SK-N-SH (cell line): ENCODE measurements at regions of chr20 and their contacts with region 1.

Region 1: DNA sequence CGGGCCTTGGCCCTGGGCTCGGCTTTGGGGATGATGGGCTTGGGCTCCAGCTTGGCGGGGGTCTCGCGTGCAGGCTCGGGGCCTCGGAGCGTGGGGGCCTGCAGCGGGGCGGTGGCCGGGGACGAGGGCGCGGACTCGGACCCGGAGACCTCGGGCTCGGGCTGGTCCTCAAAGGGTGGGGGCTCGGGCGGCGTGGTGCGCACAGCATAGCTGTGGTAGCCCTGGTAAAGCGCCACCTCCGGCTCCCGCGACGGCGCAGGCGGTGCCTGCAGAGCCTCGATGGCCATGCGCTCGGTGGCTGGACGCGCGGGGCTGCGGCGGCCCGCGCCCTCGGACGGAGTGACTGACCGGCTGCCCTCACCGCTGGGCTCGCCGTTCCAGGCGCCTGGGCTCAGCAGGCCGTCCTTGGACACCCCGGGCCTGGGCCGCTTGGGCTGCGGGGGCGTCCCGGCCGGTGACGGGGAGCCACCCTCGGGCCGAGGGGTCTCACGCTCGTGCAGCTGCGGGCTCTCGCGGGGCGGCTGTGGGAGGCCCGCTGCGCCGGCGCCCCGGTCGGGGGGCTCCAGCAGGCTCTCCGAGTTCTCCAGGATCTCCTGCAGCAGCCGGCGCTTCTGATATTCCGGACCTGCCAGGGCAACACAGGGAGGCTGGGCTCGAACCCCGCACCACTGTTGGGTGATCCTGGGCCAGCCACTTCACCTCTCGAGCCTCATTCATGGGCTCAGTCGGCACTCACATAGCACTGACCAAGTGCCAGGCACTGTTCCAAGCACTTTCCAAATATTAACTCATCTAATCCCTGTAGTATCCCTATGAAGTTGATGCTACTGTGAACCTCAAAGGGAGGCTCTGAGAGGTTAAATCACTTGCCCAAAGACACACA is 71.0 kb downstream of the JPH2 start:
- DNase-seq: peak; percentile 52
- H3K4me3 ChIP-seq: no peak overlapping the region
- H3K27ac ChIP-seq: no peak overlapping the region
- H3K4me1 ChIP-seq: no peaks in the 10 kb centered on the region; a peak in 2 of 4 replicates
- H3K27me3 ChIP-seq: no peaks in the 10 kb centered on the region
- CTCF ChIP-seq: no peak
- EP300 ChIP-seq: no peak
- RAD21 ChIP-seq: no peak

Region 2: DNA sequence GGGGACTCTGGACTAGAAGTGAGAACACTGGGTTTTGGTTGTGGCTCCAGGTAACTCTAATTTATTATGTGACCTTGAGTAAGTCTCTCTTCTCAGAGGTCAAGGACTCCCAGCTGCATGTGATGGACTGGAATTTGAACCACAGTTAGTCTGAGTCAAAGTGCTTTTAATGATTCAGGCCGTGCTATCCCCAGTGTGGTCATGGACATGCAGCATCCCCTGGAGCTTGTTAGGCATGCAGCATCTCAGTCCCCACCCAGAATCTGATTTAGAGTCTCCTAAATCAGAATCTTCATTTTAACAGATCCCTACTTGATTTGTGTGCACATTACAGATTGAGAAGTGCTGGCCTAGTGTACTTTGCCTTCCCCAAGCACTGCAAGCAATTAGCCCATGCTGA is 127.1 kb before region 1 on chr20:
- CTCF ChIA-PET with region 1: no interaction called
- POLR2A ChIA-PET with region 1: no interaction called
- DNase-seq: no peak
- H3K4me3 ChIP-seq: no peak overlapping the region
- H3K27ac ChIP-seq: no peak overlapping the region; a peak in 1 of 4 replicates
- H3K4me1 ChIP-seq: peaks cover 7 to 23% of the 10 kb centered on the region in 2 experiments; a peak in 2 of 4 replicates
- H3K27me3 ChIP-seq: no peaks in the 10 kb centered on the region
- CTCF ChIP-seq: peak; percentile 33
- EP300 ChIP-seq: no peak
- RAD21 ChIP-seq: peak; percentile 37

Region 3: GRCh38 chr20:44001667-44002596 is 114.1 kb before region 1 on chr20:
- CTCF ChIA-PET with region 1: no interaction called
- POLR2A ChIA-PET with region 1: no interaction called
- DNase-seq: no peak
- H3K4me3 ChIP-seq: no peak overlapping the region
- H3K27ac ChIP-seq: no peak overlapping the region
- H3K4me1 ChIP-seq: no peaks in the 10 kb centered on the region; a peak in 1 of 4 replicates
- H3K27me3 ChIP-seq: no peaks in the 10 kb centered on the region
- CTCF ChIP-seq: no peak
- EP300 ChIP-seq: no peak
- RAD21 ChIP-seq: no peak

Region 4: DNA sequence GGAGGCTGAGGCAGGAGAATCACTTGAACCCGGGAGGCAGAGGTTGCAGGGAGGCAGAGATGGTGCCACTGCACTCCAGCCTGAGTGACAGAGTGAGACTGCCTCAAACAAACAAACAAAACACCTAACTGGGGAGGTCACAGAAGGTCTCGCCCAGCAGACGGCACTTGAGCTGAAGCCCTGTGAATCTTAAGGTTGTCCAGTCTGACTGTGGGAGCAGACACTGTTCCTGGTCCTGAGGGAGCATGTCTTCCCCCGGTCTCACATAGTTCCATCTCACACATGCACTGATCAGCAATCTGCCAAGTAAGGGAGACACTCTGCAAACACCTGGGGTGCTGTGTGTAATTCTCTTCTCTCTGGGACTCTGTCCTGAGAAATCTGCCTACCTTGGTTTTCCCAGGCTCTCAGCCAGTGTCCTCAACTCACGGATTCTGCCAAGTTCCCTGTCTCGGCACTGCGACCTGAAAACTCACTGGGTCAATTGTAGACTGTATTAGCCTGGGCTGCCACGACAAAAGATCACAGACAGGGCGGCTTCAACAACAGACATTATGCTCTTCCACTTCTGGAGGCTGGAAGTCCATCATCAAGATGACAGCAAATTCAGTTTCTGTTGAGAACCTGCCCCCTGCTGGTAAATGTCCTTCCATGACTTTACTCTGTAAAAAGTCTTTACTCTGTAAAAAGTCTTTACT is 23.3 kb before region 1 on chr20:
- CTCF ChIA-PET with region 1: interaction called, 15 read pairs
- POLR2A ChIA-PET with region 1: no interaction called
- DNase-seq: peak; percentile 51
- H3K4me3 ChIP-seq: no peak overlapping the region; a peak in 1 of 4 replicates
- H3K27ac ChIP-seq: no peak overlapping the region
- H3K4me1 ChIP-seq: peaks cover 0 to 16% of the 10 kb centered on the region in 2 experiments; a peak in 1 of 4 replicates
- H3K27me3 ChIP-seq: no peaks in the 10 kb centered on the region
- CTCF ChIP-seq: peak; percentile 74
- EP300 ChIP-seq: no peak
- RAD21 ChIP-seq: peak; percentile 80

Region 5: GRCh38 chr20:44129911-44130718 is 14.1 kb after region 1 on chr20:
- CTCF ChIA-PET with region 1: interaction called, 40 read pairs
- POLR2A ChIA-PET with region 1: no interaction called
- DNase-seq: no peak
- H3K4me3 ChIP-seq: no peak overlapping the region
- H3K27ac ChIP-seq: no peak overlapping the region
- H3K4me1 ChIP-seq: no peaks in the 10 kb centered on the region; a peak in 1 of 4 replicates
- H3K27me3 ChIP-seq: no peaks in the 10 kb centered on the region
- CTCF ChIP-seq: no peak
- EP300 ChIP-seq: no peak
- RAD21 ChIP-seq: no peak

Region 6: GRCh38 chr20:44142413-44142812 is 26.4 kb after region 1 on chr20:
- CTCF ChIA-PET with region 1: interaction called, 28 read pairs
- POLR2A ChIA-PET with region 1: no interaction called
- DNase-seq: no peak
- H3K4me3 ChIP-seq: no peak overlapping the region
- H3K27ac ChIP-seq: no peak overlapping the region
- H3K4me1 ChIP-seq: no peaks in the 10 kb centered on the region
- H3K27me3 ChIP-seq: no peaks in the 10 kb centered on the region
- CTCF ChIP-seq: no peak
- EP300 ChIP-seq: no peak
- RAD21 ChIP-seq: no peak

Region 7: GRCh38 chr20:44196271-44196670 is 80.3 kb after region 1 on chr20:
- CTCF ChIA-PET with region 1: interaction called, 618 read pairs
- POLR2A ChIA-PET with region 1: no interaction called
- DNase-seq: no peak
- H3K4me3 ChIP-seq: no peak overlapping the region
- H3K27ac ChIP-seq: peak overlapping the region in 1 of 2 experiments; percentile 21; a peak in 1 of 4 replicates
- H3K4me1 ChIP-seq: no peaks in the 10 kb centered on the region
- H3K27me3 ChIP-seq: no peaks in the 10 kb centered on the region
- CTCF ChIP-seq: peak; percentile 46
- EP300 ChIP-seq: no peak
- RAD21 ChIP-seq: no peak

Region 8: DNA sequence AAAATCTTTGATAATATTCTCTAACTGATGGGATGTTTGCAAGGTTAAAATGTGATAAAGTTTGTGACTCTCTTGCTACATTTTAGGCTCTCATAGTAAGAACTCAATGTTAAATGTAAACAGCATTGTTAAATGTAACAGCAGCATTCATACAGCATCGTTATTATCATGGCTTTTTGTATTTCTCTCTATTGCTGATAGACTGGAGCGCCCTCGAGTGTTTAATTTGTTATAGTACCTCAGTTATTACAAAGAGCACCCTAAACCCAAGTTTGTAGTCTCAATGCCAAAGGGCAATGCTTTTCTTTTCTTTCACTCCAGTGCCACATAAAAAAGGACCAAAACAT is 344.8 kb after region 1 on chr20:
- CTCF ChIA-PET with region 1: no interaction called
- POLR2A ChIA-PET with region 1: no interaction called
- DNase-seq: peak; percentile 57
- H3K4me3 ChIP-seq: no peak overlapping the region
- H3K27ac ChIP-seq: no peak overlapping the region
- H3K4me1 ChIP-seq: peaks cover 0 to 4% of the 10 kb centered on the region in 2 experiments; a peak in 1 of 4 replicates
- H3K27me3 ChIP-seq: no peaks in the 10 kb centered on the region
- CTCF ChIP-seq: peak; percentile 67
- EP300 ChIP-seq: no peak
- RAD21 ChIP-seq: peak; percentile 84